CD4-positive, alpha-beta memory T cell (primary cell): ENCODE measurements at regions of chr3 and their contacts with region 1.

Region 1: DNA sequence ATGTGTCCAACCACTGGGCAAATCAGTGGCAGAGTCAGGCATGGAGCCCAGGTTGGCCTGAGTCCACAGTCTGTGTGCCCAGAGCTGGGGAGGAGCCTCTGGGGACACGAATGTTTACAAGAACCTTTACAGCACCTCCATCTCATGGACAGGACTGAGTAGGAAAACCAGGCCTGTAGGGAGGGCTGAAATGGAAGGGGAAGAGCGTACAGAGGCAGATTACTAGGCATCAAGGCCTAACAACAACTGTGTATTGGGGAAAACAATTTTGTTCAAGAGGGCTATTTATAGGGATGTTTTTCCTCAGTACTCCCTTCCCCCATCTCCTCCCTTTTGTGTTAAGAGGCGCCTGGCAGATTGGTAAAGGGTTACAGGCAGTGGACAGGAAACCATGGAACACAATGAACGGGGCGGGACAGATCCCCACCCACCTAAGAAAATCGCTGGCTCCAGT is 15.1 kb upstream of the ARHGAP31 start:
- DNase-seq: no peak
- H3K4me3 ChIP-seq: no peak overlapping the region
- H3K4me3 Mint-ChIP-seq: no peak overlapping the region
- H3K27ac ChIP-seq: no peak overlapping the region
- H3K27ac Mint-ChIP-seq: peak overlapping the region in 1 of 7 donors; percentile 12
- H3K4me1 ChIP-seq: no peaks in the 10 kb centered on the region
- H3K4me1 Mint-ChIP-seq: peaks cover 0 to 4% (median 2%) of the 10 kb centered on the region in 4 donors
- H3K27me3 ChIP-seq: no peaks in the 10 kb centered on the region
- H3K27me3 Mint-ChIP-seq: no peaks in the 10 kb centered on the region

Region 2: DNA sequence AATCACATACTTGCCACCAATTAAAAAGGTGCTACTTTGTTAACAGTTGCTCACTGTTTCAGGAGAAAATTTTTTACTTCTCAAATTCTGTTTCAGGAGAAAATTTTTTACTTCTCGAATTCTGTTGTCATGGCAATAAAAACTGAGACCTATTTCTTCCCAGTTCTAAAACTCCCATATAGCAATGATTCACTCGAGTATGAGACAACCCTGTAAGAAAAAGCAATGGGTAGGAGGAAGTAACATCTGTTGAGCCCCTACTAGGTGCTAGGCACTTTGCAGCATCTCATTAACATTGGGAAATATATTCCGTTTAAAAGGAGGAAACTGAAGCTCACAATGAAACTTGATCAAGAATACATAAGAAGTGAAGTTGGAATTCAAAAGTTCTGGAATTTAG is 209.4 kb before region 1 on chr3:
- CTCF ChIA-PET with region 1: no interaction called
- POLR2A ChIA-PET with region 1: no interaction called
- intact Hi-C with region 1: no loop called
- DNase-seq: no peak
- H3K4me3 ChIP-seq: no peak overlapping the region
- H3K4me3 Mint-ChIP-seq: no peak overlapping the region
- H3K27ac ChIP-seq: no peak overlapping the region
- H3K27ac Mint-ChIP-seq: no peak overlapping the region
- H3K4me1 ChIP-seq: no peaks in the 10 kb centered on the region
- H3K4me1 Mint-ChIP-seq: no peaks in the 10 kb centered on the region
- H3K27me3 ChIP-seq: no peaks in the 10 kb centered on the region
- H3K27me3 Mint-ChIP-seq: peaks cover 5 to 9% of the 10 kb centered on the region in 2 donors

Region 3: DNA sequence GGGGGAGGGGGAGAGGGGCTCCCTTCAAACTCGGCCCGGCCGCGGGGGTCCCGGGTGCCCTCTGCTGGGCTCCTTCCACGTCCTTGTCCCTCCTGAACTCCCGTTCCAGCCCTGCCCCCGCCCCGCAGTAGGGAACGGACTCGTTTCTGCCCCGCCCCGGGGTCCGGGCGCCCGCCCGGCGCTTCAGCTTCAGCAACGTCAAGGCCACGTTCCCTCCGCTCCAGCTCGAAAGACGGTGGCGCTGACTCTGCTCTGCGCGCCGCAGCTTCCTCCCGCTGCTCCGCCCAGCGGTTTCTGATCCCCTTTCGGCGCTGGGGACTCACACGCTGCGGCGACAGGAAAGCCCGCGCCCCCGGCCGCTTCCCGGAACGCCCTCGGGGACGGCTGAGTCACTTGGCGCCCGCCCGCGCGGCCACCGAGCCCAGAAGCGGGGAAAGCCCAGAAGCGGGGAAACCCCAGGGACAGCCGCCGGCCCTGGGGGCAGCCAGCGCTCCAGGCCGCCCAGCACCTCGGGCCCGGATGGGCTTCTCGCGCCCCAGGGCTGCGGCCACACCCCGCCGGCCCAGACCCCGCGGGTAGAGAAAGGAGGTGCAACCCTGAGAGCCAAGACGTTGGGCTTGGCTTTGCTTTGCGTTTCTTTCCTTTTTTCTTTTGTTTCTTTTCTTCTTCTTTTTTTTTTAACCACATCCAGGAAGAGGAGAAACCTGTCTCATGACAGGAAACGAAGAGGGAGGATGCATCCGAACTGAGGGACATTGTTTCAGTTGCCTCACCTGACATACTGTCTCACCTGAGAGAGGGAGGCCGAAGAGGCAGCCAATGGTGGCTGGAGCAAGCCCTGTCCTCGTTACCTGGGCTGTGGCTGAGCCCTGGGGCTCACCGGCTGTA is 44.0 kb after region 1 on chr3:
- CTCF ChIA-PET with region 1: interaction called, 6 read pairs
- POLR2A ChIA-PET with region 1: no interaction called
- intact Hi-C with region 1: loop called (anchors 1 kb)
- DNase-seq: peak; percentile 87 to 95 (median 89)
- H3K4me3 ChIP-seq: peak overlapping the region; percentile 20 to 73
- H3K4me3 Mint-ChIP-seq: peak overlapping the region; percentile 88 to 96 (median 90)
- H3K27ac ChIP-seq: peak overlapping the region; percentile 75
- H3K27ac Mint-ChIP-seq: peak overlapping the region; percentile 93 to 99 (median 97)
- H3K4me1 ChIP-seq: peaks cover 19% of the 10 kb centered on the region
- H3K4me1 Mint-ChIP-seq: peaks cover 13 to 38% (median 27%) of the 10 kb centered on the region in 4 donors
- H3K27me3 ChIP-seq: no peaks in the 10 kb centered on the region
- H3K27me3 Mint-ChIP-seq: no peaks in the 10 kb centered on the region

Region 4: DNA sequence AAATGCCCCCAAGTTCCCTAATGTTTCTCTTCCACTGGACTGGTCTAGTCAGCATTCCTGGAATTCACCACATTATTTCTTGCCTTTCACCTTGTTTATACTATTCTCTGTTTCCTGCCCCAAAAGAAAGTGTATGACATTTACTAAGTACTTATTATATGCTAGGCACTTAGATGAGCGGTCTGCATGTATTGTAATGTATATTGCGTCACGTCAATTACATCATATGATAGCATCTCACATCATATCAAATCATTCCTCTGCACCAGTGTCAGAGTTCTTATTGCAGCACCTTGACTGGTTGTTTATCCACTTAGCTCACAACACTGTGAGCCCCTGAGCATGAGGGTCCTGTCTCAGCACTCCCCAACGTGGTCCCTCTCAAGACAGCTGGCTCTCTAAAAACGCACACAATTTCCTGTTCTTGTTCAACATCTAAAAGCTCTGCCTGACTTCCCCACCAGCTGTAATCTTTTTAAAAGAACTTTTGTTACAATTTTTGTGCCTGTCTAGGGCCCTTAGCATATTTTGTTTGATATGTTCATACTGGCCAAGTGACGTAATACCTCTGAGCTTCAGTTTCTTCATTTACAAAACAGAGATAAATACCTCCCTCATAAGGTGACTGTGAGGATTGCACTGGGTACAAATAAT is 73.8 kb after region 1 on chr3:
- CTCF ChIA-PET with region 1: interaction called, 34 read pairs
- POLR2A ChIA-PET with region 1: interaction called, 4 read pairs
- intact Hi-C with region 1: loop called (anchors 1 kb)
- DNase-seq: peak in 4 of 5 donors; percentile 32 to 49 (median 38)
- H3K4me3 ChIP-seq: no peak overlapping the region
- H3K4me3 Mint-ChIP-seq: peak overlapping the region in 3 of 8 donors; percentile 19 to 46 (median 44)
- H3K27ac ChIP-seq: no peak overlapping the region
- H3K27ac Mint-ChIP-seq: peak overlapping the region in 5 of 7 donors; percentile 8 to 70 (median 42)
- H3K4me1 ChIP-seq: peaks cover 24% of the 10 kb centered on the region
- H3K4me1 Mint-ChIP-seq: peaks cover 25 to 34% (median 27%) of the 10 kb centered on the region in 4 donors
- H3K27me3 ChIP-seq: no peaks in the 10 kb centered on the region
- H3K27me3 Mint-ChIP-seq: no peaks in the 10 kb centered on the region

Region 5: GRCh38 chr3:119469381-119470189 is 190.5 kb after region 1 on chr3:
- CTCF ChIA-PET with region 1: interaction called, 8 read pairs
- POLR2A ChIA-PET with region 1: interaction called, 3 read pairs
- intact Hi-C with region 1: loop called (anchors 1 kb)
- DNase-seq: peak in 3 of 5 donors; percentile 5 to 21 (median 15)
- H3K4me3 ChIP-seq: peak overlapping the region; percentile 70 to 84
- H3K4me3 Mint-ChIP-seq: peak overlapping the region; percentile 92 to 98 (median 97)
- H3K27ac ChIP-seq: peak overlapping the region; percentile 92
- H3K27ac Mint-ChIP-seq: peak overlapping the region; percentile 79 to 97 (median 93)
- H3K4me1 ChIP-seq: peaks cover 24% of the 10 kb centered on the region
- H3K4me1 Mint-ChIP-seq: peaks cover 19 to 33% (median 28%) of the 10 kb centered on the region in 4 donors
- H3K27me3 ChIP-seq: no peaks in the 10 kb centered on the region
- H3K27me3 Mint-ChIP-seq: no peaks in the 10 kb centered on the region